ENCODE measurements at regions of chr14 and their contacts with region 1.

Region 1: GRCh38 chr14:100698666-100699448 is 27.8 kb upstream of the DLK1 start:
- DNase-seq: peak in 1 of 3 donors; percentile 52
- H3K4me3 ChIP-seq: peak overlapping the region in 1 of 7 experiments; percentile 35
- H3K27ac ChIP-seq: peak overlapping the region in 1 of 2 experiments; percentile 43
- H3K4me1 ChIP-seq: peaks cover 0 to 39% (median 17%) of the 10 kb centered on the region in 4 experiments
- H3K27me3 ChIP-seq: no peaks in the 10 kb centered on the region

Region 2: DNA sequence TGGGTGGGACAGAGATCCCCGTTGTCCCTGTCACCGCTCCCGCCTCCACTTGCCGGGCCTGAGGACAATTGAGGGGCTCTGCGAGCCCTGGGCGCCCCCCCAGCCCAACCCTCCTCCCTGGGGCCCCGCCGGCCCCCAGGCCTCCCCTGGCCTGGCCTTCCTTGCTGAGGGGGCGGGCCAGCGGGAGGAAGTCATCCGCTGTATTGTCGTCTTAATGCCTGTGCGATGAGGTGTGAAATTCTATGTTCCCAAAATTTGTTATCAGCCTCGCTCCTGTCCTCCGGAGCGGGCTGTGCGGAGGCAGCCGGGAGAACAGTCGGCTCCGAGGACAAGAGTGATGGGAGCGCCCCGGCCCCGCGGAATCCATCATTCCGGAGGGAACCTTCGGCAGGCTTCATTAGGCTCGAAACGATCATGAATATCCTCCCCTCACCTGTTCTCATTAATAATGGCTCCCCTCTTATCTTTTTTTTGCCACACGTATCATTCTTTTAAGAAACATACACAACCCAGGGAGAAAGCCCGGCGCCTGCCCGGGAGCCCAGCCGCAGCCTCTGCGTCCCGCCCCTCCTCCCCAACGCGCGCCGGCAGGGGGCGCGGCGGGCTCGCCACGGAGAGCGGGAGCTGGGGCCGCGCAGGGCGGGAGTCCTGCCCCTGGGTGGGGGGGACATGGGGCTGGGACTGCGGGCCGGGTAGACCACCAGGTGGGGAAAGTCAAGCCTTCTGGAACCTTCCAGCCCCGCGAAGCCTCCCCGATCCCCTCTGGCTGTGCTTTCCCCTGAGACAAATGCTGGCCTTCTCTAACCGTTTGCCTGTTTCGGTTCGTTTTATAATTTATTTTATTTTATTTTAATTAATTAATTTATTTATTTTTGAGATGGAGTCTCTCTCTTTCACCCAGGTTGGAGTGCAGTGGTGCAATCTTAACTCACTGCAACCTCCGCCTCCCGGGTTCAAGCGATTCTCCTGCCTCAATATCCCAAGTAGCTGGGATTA is 10.7 kb after region 1 on chr14:
- CTCF ChIA-PET with region 1: interaction called, 17 read pairs
- POLR2A ChIA-PET with region 1: interaction called, 3 read pairs
- DNase-seq: peak; percentile 42 to 59 (median 48)
- H3K4me3 ChIP-seq: peak overlapping the region in 3 of 7 experiments; percentile 8 to 57 (median 26)
- H3K27ac ChIP-seq: no peak overlapping the region
- H3K4me1 ChIP-seq: peaks cover 2 to 64% (median 50%) of the 10 kb centered on the region in 4 experiments
- H3K27me3 ChIP-seq: no peaks in the 10 kb centered on the region

Region 3: GRCh38 chr14:101019990-101020710 is 321.3 kb after region 1 on chr14:
- CTCF ChIA-PET with region 1: no interaction called
- POLR2A ChIA-PET with region 1: no interaction called
- DNase-seq: no peak
- H3K4me3 ChIP-seq: no peak overlapping the region
- H3K27ac ChIP-seq: no peak overlapping the region
- H3K4me1 ChIP-seq: no peaks in the 10 kb centered on the region
- H3K27me3 ChIP-seq: no peaks in the 10 kb centered on the region